Activated CD8-positive, alpha-beta memory T cell treated with anti-CD3 and anti-CD28 coated beads, Interleukin-2, amount 10 ng/mL, durations not matched to agents 7 days and 5 days (primary cell): ENCODE measurements at regions of chr16 and their contacts with region 1.

Region 1: DNA sequence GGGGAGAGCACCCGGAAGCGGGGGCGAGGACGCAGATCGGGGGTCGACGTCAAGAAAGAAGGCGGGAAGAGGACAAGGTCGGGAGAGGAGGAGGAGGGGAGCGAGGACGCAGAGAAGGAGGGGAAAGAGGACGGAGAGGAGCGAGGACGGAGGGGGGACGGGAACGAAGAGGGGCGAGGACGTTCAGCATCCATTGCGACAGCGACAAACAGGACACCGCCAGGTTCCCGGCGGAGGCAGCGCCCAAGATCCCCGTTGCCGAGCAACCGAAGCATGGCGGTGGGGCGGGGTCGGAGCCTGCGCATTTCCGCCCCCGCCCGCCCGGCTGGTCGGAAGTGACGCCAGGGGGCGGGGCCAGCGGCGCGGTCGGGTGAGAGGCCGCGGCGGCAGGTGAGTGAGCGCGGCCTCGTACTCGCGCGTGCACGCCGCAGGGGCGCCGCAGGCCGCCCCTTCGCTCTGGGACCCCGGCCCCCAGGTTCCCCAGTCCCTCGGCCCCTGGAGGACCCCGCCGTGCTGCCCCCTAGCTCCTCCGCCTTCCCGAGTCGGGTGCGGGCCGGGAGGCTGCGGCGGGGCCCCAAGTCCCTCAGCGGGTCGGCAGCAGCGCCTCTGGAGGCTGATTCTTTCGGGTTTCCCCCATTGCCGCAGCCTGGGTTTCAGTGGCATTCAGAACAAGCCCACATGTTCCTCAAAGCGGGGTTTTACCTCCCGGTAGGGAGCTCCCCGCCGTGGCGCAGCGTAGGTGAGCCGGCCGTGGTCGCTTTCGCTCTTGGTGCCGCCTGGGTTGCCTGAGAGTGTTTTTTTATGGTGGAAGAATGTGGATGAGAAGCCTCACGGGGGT is at the start of gene FAM234A:
- DNase-seq: peak; percentile 96
- ATAC-seq: peak; percentile 86
- H3K4me3 Mint-ChIP-seq: peak within 1 kb of the TSS; percentile 95
- H3K27ac Mint-ChIP-seq: peak within 1 kb of the TSS; percentile 95
- H3K4me1 Mint-ChIP-seq: peaks cover 13% of the 10 kb centered on the region
- H3K27me3 Mint-ChIP-seq: peaks cover 8% of the 10 kb centered on the region
- total RNA-seq, gene FAM234A: 9.1 to 10.1 TPM

Region 2: GRCh38 chr16:252366-253337 is 18.0 kb after region 1 on chr16:
- CTCF ChIA-PET with region 1: interaction called, 12 read pairs
- DNase-seq: peak; percentile 51
- ATAC-seq: peak; percentile 77
- H3K4me3 Mint-ChIP-seq: peak overlapping the region; percentile 51
- H3K27ac Mint-ChIP-seq: peak overlapping the region; percentile 77
- H3K4me1 Mint-ChIP-seq: peaks cover 18% of the 10 kb centered on the region
- H3K27me3 Mint-ChIP-seq: no peaks in the 10 kb centered on the region

Region 3: DNA sequence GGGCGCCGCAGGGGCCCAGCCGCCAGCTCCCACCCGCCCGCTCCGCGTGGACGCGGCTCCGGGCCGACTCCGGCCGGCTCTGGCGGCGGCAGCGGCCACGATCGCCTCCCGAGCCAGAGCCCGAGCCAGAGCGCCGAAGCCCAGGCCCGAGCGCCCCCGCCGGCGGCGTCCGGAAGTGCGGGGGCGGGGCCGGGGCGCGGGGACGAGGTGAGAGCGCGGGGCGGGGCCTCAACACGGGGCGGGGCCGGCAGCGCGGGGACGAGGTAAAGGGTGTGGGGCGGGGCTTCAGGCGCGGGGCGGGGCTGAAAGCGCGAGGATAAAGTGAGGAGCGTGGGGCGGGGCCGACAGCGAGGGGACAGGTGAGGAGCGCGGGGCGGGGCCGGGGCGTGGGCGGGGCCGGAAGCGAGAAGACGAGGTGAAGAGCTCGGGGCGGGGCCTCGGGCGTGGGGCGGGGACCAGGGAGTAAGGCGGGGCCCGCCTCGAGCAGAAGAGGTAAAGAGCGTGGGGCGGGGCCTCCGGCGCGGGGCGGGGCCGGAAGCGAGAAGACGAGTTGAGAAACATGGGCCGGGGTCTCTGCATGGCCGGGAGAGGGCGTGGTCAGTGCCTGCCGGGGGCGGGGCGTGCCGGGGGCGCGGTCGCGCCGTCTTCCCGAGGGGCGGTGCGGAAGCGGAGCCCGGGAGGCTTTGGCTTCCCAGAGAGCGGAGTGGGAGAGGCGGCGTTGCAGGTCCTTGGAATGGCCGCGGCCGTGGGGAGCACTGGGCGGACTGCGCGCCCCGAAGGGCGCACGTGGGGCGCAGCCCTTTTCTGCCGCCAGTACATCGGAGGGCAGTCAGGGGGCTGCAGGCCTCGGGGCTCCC is 118.1 kb after region 1 on chr16 and contains the start of gene AXIN1:
- CTCF ChIA-PET with region 1: interaction called, 10 read pairs
- DNase-seq: peak; percentile 100
- ATAC-seq: peak; percentile 83
- H3K4me3 Mint-ChIP-seq: peak within 1 kb of the TSS; percentile 79
- H3K27ac Mint-ChIP-seq: peak within 1 kb of the TSS; percentile 77
- H3K4me1 Mint-ChIP-seq: peaks cover 42% of the 10 kb centered on the region
- H3K27me3 Mint-ChIP-seq: no peaks in the 10 kb centered on the region
- total RNA-seq, gene AXIN1: 22.3 to 25.7 TPM

Region 4: DNA sequence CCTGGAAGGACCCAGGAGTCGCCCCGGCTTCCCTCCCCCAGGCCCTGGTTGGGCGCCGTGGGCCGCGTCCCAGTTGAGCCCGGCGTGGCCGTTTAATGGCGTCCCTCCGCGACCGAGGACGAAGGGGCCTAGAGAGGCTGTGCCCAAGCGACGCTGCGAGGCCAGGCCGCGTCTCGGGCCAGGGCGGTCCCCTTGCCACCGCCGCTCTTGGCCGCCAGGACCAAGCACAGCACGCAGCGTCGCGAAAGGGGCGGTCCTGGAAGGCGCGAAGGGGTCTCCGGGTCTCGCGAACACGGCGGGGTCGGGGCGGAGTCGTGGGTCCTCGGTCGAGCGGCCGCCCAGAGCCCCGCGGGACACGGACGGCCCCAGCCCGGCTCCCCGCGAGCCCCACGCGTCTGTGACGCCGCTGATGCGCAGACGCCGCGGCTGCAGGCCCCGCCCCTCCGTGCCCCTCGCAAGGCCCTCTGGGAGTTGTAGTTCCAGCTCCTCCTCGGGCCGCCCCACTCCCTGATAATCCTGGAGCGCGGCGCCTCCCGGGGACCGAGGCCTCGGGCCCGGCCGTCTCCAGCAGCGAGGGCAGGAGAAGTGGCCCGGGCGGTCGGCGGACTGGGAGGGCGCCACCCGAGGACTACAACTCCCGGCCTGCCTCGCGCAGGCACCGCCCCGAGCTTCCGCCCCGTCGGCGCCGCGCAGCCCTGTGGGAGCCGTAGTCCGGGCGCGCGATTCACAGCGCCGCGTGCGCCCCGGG is 292.5 kb after region 1 on chr16 and contains the start of gene CAPN15:
- CTCF ChIA-PET with region 1: no interaction called
- DNase-seq: peak; percentile 89
- ATAC-seq: peak; percentile 77
- H3K4me3 Mint-ChIP-seq: peak within 1 kb of the TSS; percentile 92
- H3K27ac Mint-ChIP-seq: peak within 1 kb of the TSS; percentile 96
- H3K4me1 Mint-ChIP-seq: peaks cover 49% of the 10 kb centered on the region
- H3K27me3 Mint-ChIP-seq: no peaks in the 10 kb centered on the region
- total RNA-seq, gene CAPN15: 113 to 121 TPM